Panc1 (cell line): ENCODE measurements at regions of chr9 and their contacts with region 1.

Region 1: GRCh38 chr9:129413537-129414376 is 207.1 kb downstream of the C9orf50 start:
- DNase-seq: peak; percentile 32
- ATAC-seq: peak; percentile 87
- H3K4me3 ChIP-seq: peak overlapping the region; percentile 18 to 30; a peak in 3 of 4 replicates
- H3K27ac ChIP-seq: peak overlapping the region; percentile 95
- H3K4me1 ChIP-seq: peaks cover 39% of the 10 kb centered on the region
- H3K27me3 ChIP-seq: no peaks in the 10 kb centered on the region
- CTCF ChIP-seq: no peak

Region 2: DNA sequence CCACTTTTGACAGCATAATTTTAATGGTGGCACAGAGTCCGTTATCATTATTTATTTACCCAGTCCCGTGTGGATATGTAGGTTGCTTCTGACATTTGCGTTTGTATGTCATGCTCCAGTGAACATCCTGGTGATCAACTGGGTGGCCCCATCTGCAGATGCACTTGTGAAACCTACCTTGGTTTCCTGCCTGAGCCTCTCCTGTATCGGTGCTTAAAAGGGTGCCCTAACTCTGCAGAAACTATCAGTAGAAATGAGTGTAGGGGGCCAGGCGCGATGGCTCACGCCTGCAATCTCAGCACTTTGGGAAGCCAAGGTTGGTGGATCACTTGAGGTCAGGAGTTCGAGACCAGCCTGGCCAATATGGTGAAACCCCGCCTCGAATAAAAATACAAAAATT is 143.6 kb before region 1 on chr9:
- CTCF ChIA-PET with region 1: no interaction called
- POLR2A ChIA-PET with region 1: no interaction called
- in situ Hi-C with region 1: no loop called
- intact Hi-C with region 1: no loop called
- DNase-seq: no peak
- ATAC-seq: no peak
- H3K4me3 ChIP-seq: no peak overlapping the region
- H3K27ac ChIP-seq: no peak overlapping the region
- H3K4me1 ChIP-seq: no peaks in the 10 kb centered on the region
- H3K27me3 ChIP-seq: no peaks in the 10 kb centered on the region
- CTCF ChIP-seq: no peak

Region 3: DNA sequence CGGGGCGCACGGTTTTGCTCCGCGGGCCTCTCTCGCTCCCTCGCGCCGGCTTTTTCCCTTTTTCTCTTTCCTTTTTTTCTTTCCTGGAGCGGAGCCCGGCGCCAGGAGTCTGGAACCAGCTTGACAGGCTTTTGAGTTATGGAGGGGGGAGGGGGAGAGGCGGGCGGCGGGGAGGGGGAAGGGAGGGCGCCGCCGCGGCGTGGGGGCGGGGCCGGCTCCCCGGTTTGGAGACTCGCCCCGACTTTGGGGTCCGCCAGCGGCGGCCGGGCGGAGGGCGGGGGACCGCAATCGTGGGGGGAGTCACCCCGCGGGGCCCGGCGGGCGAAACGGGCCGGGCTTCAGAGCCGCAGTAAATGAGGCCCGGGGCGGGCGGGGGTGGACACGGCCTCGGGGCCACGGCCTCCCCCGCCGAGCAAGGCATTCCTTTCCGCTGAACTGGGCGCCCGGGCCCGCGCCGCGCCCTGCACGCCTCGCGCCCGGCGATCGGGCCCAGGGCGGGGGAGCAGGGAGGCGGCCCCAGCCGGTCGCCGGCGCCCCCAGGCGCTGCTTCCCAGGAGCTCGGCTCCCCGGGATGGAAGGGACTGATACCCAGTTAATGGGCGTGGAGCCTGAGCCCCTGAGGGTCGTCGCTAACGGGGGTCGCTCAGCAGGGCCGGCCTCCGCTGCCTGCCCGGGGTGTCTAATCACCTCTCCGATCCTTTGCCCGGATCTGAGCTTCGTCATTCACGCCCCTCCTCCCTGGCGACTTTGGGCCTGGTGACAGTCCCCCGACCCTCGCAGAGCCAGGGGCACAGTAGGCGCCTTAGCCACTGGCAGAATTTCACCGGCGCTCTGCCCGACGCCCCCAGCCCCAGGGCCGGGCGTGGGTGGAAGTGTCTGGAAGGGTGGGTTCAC is 69.0 kb after region 1 on chr9:
- CTCF ChIA-PET with region 1: no interaction called
- POLR2A ChIA-PET with region 1: no interaction called
- in situ Hi-C with region 1: no loop called
- intact Hi-C with region 1: loop called (anchors 10 kb)
- DNase-seq: no peak
- ATAC-seq: peak; percentile 70
- H3K4me3 ChIP-seq: peak overlapping the region; percentile 4 to 11; a peak in 2 of 4 replicates
- H3K27ac ChIP-seq: peak overlapping the region; percentile 98
- H3K4me1 ChIP-seq: peaks cover 81% of the 10 kb centered on the region
- H3K27me3 ChIP-seq: no peaks in the 10 kb centered on the region
- CTCF ChIP-seq: no peak